ENCODE measurements at regions of chr1 and their contacts with region 1.

Region 1: GRCh38 chr1:8314346-8315280 is 3.3 kb upstream of the SLC45A1 start:
- DNase-seq: peak; percentile 78 to 80
- ATAC-seq: peak; percentile 87 to 89
- H3K4me3 ChIP-seq: no peak overlapping the region
- H3K27ac ChIP-seq: peak overlapping the region; percentile 90 to 92
- H3K4me1 ChIP-seq: peaks cover 38% of the 10 kb centered on the region
- CTCF ChIP-seq: peak; percentile 76
- EP300 ChIP-seq: no peak
- POLR2A ChIP-seq: no peak
- RAD21 ChIP-seq: peak; percentile 99

Region 2: DNA sequence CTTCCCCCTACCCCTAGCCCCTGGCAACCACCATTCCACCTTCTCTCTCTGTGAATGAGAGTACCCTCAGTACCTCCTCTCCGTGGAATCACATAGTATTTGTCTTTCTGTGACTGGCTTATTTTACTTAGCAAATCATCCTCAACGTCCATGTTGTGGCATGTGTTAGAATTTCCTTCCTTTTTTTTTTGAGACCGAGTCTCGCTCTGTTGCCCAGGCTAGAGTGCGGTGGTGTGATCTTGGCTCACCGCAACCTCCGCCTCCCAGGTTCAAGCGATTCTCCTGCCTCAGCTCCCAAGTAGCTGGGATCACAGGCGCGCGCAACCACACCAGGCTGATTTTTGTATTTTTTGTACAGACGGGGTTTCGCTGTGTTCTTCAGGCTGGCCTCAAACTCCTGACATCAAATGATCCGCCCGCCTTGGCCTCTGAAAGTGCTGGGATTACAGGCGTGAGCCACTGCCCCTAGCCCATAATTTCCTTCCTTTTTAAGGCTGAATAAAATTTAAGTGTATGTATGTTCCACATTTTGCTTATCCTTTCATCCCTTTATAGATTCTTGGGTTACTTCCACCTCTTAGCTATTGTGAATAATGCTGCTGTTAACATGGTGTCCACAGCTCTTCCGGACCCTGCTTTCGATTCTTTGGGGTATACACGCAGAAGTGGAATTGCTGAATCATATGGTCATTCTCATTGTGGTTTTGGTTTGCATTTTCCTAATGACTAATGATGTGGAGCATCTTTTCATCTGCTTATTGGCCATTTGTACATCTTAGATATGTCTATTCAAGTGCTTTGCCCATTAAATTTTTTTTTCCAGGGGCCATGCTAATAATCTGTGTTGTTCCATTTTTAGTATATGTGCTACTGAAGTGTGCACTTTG is 320.8 kb before region 1 on chr1:
- CTCF ChIA-PET with region 1: interaction called, 13 read pairs
- POLR2A ChIA-PET with region 1: no interaction called
- DNase-seq: no peak
- ATAC-seq: no peak
- H3K4me3 ChIP-seq: no peak overlapping the region
- H3K27ac ChIP-seq: peak overlapping the region; percentile 11 to 49; a peak in 2 of 6 replicates
- H3K4me1 ChIP-seq: peaks cover 1% of the 10 kb centered on the region; the same call in 2 of the 3 replicates
- CTCF ChIP-seq: no peak
- EP300 ChIP-seq: no peak
- POLR2A ChIP-seq: no peak
- RAD21 ChIP-seq: no peak

Region 3: GRCh38 chr1:8026153-8026975 is 288.2 kb before region 1 on chr1 and contains the start of gene ERRFI1:
- CTCF ChIA-PET with region 1: interaction called, 172 read pairs
- POLR2A ChIA-PET with region 1: interaction called, 5 read pairs
- DNase-seq: peak; percentile 55 to 94
- ATAC-seq: peak; percentile 75 to 76
- H3K4me3 ChIP-seq: peak within 1 kb of the TSS; percentile 91
- H3K27ac ChIP-seq: peak within 1 kb of the TSS; percentile 98 to 100
- H3K4me1 ChIP-seq: peaks cover 28% of the 10 kb centered on the region
- CTCF ChIP-seq: no peak
- EP300 ChIP-seq: no peak
- POLR2A ChIP-seq: peak; percentile 97
- RAD21 ChIP-seq: no peak
- polyA plus RNA-seq, gene ERRFI1: 193 and 217 TPM in 2 replicates

Region 4: GRCh38 chr1:8186596-8186995 is 128.0 kb before region 1 on chr1:
- CTCF ChIA-PET with region 1: interaction called, 11 read pairs
- POLR2A ChIA-PET with region 1: no interaction called
- DNase-seq: no peak
- ATAC-seq: no peak
- H3K4me3 ChIP-seq: no peak overlapping the region
- H3K27ac ChIP-seq: peak overlapping the region; percentile 69 to 98; a peak in 5 of 6 replicates
- H3K4me1 ChIP-seq: peaks cover 41% of the 10 kb centered on the region
- CTCF ChIP-seq: no peak
- EP300 ChIP-seq: no peak
- POLR2A ChIP-seq: no peak
- RAD21 ChIP-seq: no peak

Region 5: GRCh38 chr1:8259498-8260290 is 54.9 kb before region 1 on chr1:
- CTCF ChIA-PET with region 1: interaction called, 11 read pairs
- POLR2A ChIA-PET with region 1: no interaction called
- DNase-seq: peak; percentile 13 to 69
- ATAC-seq: peak; percentile 80 to 88
- H3K4me3 ChIP-seq: peak overlapping the region; percentile 12; the same call in 2 of the 3 replicates
- H3K27ac ChIP-seq: peak overlapping the region; percentile 72 to 79
- H3K4me1 ChIP-seq: peaks cover 34% of the 10 kb centered on the region
- CTCF ChIP-seq: no peak
- EP300 ChIP-seq: peak; percentile 44 to 60; a peak in 3 of 5 replicates
- POLR2A ChIP-seq: no peak
- RAD21 ChIP-seq: no peak; a peak in 1 of 5 replicates